Uterus (tissue), 4 donors: ENCODE measurements at regions of chr3 and their contacts with region 1.

Region 1: GRCh38 chr3:150703299-150704134 is at the start of gene ERICH6:
- DNase-seq: peak; percentile 88 to 91
- H3K4me3 ChIP-seq: peak within 1 kb of the TSS; percentile 48 to 56
- H3K27ac ChIP-seq: peak within 1 kb of the TSS; percentile 78 to 82
- H3K4me1 ChIP-seq: no peaks in the 10 kb centered on the region
- H3K27me3 ChIP-seq: no peaks in the 10 kb centered on the region
- CTCF ChIP-seq: peak in 3 of 4 experiments; percentile 20 to 45 (median 23)
- POLR2A ChIP-seq: peak; percentile 21 to 46
- total RNA-seq, gene ERICH6: not detected

Region 2: DNA sequence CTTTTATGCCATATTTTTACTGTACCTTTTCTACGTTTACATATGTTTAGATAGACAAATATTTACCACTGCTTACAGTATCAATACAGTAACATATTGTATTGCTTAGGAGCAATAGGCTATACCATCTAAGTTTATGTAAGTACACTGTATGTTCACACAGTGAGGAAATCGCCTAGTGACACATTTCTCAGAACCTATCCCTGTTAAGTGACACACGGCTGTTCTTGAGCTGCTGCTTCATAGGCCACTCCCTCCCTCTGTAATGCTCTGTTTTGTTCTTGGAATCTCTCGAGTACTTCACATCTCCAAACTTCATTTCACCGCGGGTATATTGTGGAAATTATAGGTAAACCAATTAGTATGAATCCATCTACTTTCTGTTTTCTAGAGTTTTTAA is 113.8 kb before region 1 on chr3:
- intact Hi-C with region 1: no loop called
- DNase-seq: no peak
- H3K4me3 ChIP-seq: no peak overlapping the region
- H3K27ac ChIP-seq: no peak overlapping the region
- H3K4me1 ChIP-seq: no peaks in the 10 kb centered on the region
- H3K27me3 ChIP-seq: no peaks in the 10 kb centered on the region
- CTCF ChIP-seq: no peak
- POLR2A ChIP-seq: no peak

Region 3: DNA sequence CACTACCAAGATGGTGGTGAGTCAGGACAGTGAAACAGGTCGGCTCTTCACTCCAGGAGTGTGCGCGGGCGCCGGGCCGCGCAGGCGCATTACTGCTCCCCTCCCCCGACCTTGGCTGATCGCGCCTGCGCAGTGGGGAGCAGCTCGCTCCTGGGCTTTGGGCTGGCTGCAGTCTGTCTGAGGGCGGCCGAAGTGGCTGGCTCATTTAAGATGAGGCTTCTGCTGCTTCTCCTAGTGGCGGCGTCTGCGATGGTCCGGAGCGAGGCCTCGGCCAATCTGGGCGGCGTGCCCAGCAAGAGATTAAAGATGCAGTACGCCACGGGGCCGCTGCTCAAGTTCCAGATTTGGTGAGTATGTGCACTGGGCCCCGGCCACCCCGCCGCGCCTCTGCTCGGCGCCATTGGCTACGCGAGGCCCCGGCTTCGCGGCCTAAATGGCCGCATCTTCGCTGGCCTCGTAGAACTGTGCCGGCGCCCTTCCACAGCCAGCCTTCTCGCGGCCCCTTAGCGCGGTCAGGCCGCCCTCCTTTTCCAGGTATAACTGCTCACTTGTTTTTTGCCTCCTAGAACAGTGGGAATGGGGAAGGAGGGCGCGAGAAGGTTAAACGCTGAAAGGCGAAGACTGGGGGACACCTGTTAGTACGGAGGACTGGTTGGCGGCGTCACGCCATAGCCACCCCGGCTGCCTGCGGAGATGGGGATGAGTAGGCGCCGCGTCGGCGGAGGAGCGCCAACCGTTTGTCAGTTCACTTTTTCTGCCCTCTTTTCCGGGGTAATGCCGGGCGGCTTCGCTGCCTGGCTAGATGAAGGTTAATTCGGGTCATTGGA is 100.2 kb before region 1 on chr3 and contains the start of gene SELENOT:
- intact Hi-C with region 1: loop called (anchors 5 kb)
- DNase-seq: peak; percentile 95 to 96
- H3K4me3 ChIP-seq: peak within 1 kb of the TSS; percentile 62 to 72
- H3K27ac ChIP-seq: peak within 1 kb of the TSS; percentile 93 to 95
- H3K4me1 ChIP-seq: no peaks in the 10 kb centered on the region
- H3K27me3 ChIP-seq: no peaks in the 10 kb centered on the region
- CTCF ChIP-seq: peak in 3 of 4 experiments; percentile 29 to 50 (median 43)
- POLR2A ChIP-seq: peak; percentile 87 to 95
- total RNA-seq, gene SELENOT: 98.0 to 158 (median 111) TPM